Mucosa of descending colon (tissue), 3 donors: ENCODE measurements at regions of chr13 and their contacts with region 1.

Region 1: GRCh38 chr13:27826379-27827353 is 34.4 kb downstream of the GSX1 start:
- DNase-seq: peak; percentile 79 to 89 (median 85)
- ATAC-seq: peak; percentile 92
- H3K4me3 ChIP-seq: no peak overlapping the region
- H3K4me1 ChIP-seq: peaks cover 5% of the 10 kb centered on the region
- CTCF ChIP-seq: peak; percentile 88

Region 2: DNA sequence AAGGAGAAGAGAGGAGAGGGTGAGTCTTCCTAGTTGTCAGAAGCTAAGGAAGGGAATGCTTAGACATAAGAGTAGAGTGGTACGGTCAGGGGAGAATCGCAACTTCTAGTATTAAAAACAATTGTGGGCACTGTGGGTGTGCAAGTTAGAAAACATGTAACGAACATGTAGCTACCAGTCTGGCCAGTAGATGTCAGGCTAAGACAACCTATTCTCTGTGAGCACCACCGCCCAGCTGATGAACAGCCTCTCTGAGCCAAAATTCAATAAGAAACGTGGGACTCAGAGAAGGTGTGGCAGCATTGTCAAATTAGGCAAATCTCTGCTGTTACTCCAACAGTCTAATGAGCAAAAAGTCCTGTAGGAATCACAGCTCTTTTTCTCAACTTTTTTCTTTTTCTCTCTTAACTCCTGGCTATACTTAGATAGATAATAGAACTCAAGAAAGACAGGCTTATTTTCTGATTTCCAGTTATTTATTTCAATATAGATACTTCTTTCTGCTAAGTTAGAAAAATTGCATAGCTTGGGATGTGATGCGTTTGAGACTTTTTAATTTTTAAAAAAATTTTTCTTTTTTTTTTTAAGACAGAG is 841.3 kb before region 1 on chr13:
- intact Hi-C with region 1: loop called in 1 of 2 experiments (anchors 10 kb)
- DNase-seq: peak in 1 of 3 donors; percentile 94
- ATAC-seq: peak; percentile 70
- H3K4me3 ChIP-seq: no peak overlapping the region
- H3K4me1 ChIP-seq: peaks cover 33% of the 10 kb centered on the region
- CTCF ChIP-seq: peak; percentile 41

Region 3: GRCh38 chr13:27362064-27362883 is 464.4 kb before region 1 on chr13:
- intact Hi-C with region 1: loop called in 1 of 2 experiments (anchors 2 kb)
- DNase-seq: peak; percentile 88 to 95 (median 94)
- ATAC-seq: peak; percentile 99
- H3K4me3 ChIP-seq: no peak overlapping the region
- H3K4me1 ChIP-seq: no peaks in the 10 kb centered on the region
- CTCF ChIP-seq: peak; percentile 80

Region 4: DNA sequence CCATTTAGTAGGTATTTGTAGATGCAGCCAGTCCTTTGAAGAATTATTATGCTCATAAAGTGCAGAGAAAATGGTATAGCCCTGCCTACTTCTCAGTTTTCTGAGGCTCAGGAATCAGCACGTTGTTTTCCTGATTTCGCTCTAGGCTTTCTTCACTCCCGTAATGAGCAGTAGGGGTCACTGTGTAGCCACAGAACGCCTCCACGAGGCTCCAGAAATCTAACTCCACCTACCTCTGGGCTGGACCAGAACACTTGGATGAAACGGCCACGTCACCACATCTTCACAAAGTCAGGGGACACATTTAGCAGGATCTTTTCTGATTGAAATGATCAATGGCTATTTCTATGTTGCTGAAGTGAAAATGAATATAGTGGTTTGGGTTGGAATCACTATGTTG is 452.0 kb before region 1 on chr13:
- intact Hi-C with region 1: loop called in 1 of 2 experiments (anchors 2 kb)
- DNase-seq: peak in 2 of 3 donors; percentile 62 to 84
- ATAC-seq: peak; percentile 85
- H3K4me3 ChIP-seq: no peak overlapping the region
- H3K4me1 ChIP-seq: peaks cover 6% of the 10 kb centered on the region
- CTCF ChIP-seq: peak; percentile 49

Region 5: DNA sequence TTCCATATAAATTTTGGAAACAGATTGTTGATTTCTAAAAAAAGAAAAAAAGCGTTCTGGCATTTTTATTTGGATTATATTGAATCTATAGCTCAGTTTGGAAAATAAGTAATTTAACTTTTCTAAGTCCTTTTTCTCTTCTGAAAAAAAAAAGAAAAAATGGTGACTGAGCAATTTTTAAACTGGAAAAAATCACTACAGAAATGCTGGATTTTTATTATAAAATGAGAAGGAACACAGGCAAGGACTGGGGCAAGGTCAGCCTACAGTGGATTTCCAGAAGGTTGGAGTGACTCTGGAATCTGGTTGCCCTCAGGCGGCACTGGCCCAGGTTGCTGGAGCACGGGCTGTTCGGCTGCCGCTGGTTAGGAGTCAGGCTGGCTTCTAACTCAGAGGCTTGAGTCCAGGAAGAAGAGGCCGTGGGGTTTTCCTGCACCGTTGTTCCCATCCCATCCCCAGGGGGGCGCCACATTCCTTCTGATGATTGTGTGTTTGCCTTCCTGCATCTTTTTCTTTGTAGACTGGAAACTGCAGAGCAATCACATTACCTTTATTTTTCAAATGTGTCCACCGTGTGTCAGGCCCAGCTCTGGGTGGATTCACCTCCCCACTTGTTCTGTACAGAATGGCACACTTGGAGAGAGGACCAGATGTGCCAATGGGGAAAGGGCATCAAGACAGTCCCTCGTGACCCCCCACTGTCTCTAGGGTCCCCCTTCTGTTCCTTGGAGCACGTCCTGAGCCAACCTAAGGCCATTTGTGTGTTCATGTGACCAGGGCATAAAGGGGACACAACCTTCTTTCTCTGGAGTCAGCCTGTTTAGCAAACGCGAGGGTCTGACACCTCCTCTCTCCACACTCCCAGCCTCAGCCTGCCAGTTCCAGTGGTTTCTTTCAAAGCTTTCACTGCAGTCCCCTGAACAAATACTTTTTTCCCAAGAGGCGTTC is 446.7 kb before region 1 on chr13:
- intact Hi-C with region 1: loop called (anchors 2 to 5 kb)
- DNase-seq: peak; percentile 79 to 91 (median 90)
- ATAC-seq: peak; percentile 95
- H3K4me3 ChIP-seq: no peak overlapping the region
- H3K4me1 ChIP-seq: peaks cover under 1% of the 10 kb centered on the region
- CTCF ChIP-seq: peak; percentile 28

Region 6: GRCh38 chr13:27533155-27533643 is 293.5 kb before region 1 on chr13:
- intact Hi-C with region 1: loop called in 1 of 2 experiments (anchors 10 kb)
- DNase-seq: peak; percentile 81 to 92 (median 92)
- ATAC-seq: peak; percentile 95
- H3K4me3 ChIP-seq: no peak overlapping the region
- H3K4me1 ChIP-seq: no peaks in the 10 kb centered on the region
- CTCF ChIP-seq: peak; percentile 85

Region 7: DNA sequence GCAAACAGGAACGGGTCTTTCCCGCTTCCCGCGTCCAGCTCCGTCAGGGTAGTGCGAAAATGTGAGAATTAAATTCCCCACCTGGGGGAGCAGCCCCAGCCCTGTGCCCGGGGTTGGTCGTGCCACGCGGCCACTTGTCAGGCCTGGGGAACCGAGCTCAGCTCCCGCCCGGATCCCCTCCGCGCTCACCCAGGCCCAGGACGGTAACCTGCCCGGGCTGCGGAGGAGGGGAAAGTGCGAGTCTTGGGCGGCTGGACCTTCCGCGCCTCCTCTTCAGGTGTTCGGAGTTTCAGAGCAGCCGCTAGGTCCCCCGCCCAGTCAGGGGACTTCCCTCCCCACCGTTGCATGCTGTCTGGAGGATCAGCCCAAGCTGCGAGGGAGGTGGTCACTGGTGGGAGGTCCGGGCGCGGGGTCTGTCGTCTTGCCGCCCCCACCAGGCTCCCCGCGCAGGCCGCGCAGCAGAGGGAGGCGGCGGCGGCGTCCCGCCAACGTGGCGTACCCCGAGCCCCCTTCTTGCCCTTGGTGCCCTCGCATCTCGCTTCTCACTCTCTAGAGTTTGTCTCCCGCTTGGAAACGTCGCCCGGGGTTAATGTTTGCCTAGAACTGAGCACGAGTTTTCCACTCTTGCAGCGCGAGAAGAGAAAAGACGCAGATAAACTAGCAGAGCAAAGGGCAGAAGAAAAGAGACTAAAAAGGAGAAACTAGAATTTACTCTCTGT is 153.8 kb after region 1 on chr13:
- intact Hi-C with region 1: loop called (anchors 10 kb)
- DNase-seq: peak; percentile 55 to 79 (median 74)
- ATAC-seq: peak; percentile 32
- H3K4me3 ChIP-seq: peak overlapping the region; percentile 21
- H3K4me1 ChIP-seq: no peaks in the 10 kb centered on the region
- CTCF ChIP-seq: no peak

Region 8: GRCh38 chr13:28138012-28138755 is 311.5 kb after region 1 on chr13 and contains the start of gene PAN3:
- intact Hi-C with region 1: no loop called
- DNase-seq: peak; percentile 92 to 97 (median 95)
- ATAC-seq: peak; percentile 85
- H3K4me3 ChIP-seq: peak within 1 kb of the TSS; percentile 98
- H3K4me1 ChIP-seq: no peaks in the 10 kb centered on the region
- CTCF ChIP-seq: no peak
- total RNA-seq, gene PAN3: 28.4 to 43.7 (median 40.2) TPM